A673 (cell line): ENCODE measurements at regions of chr12 and their contacts with region 1.

Region 1: DNA sequence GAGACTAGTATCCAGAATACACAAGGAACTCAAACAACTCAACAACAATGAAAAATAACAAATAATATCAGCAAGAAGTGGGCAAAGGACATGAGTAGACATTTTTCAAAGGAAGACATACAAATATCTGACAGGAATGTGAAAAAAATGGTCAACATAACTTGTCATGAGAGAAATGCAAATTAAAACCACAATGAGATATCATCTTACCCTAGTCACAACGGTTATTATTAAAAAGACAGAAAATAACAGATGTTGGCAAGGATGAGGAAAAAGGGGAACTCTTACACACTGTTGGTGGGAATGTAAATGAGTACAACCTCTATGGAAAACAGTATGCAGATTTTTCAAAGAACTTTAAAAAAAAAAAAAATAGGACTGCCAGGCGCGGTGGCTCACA is 20.4 kb downstream of the VWF start:
- DNase-seq: no peak
- H3K4me3 ChIP-seq: no peak overlapping the region
- H3K27ac ChIP-seq: no peak overlapping the region
- H3K4me1 ChIP-seq: no peaks in the 10 kb centered on the region
- H3K27me3 ChIP-seq: no peaks in the 10 kb centered on the region
- CTCF ChIP-seq: no peak

Region 2: DNA sequence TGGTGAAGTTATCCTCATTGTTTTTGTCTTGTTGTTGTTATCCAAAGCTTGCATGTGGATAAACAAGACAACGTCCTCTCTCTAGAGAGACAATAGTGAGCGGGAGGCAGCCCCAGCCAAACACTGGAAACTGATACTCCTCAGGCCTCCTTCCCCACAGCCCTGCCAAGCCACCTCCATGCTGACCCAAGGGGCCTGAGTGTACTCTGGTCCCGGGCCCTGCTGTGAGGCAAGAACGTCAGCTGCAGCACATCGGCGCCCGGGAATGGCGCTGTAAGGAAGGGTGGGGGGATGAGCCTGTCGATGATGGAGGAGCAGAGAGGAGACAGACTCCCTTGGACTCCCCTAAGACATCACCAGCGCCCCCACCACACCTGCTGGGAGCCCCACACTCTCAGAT is 242.6 kb before region 1 on chr12:
- CTCF ChIA-PET with region 1: no interaction called
- POLR2A ChIA-PET with region 1: no interaction called
- intact Hi-C with region 1: no loop called
- DNase-seq: no peak
- H3K4me3 ChIP-seq: no peak overlapping the region
- H3K27ac ChIP-seq: no peak overlapping the region
- H3K4me1 ChIP-seq: no peaks in the 10 kb centered on the region
- H3K27me3 ChIP-seq: peaks cover 32% of the 10 kb centered on the region
- CTCF ChIP-seq: no peak

Region 3: GRCh38 chr12:6140651-6141447 is 36.8 kb after region 1 on chr12:
- CTCF ChIA-PET with region 1: no interaction called
- POLR2A ChIA-PET with region 1: interaction called, 13 read pairs
- intact Hi-C with region 1: no loop called
- DNase-seq: no peak
- H3K4me3 ChIP-seq: no peak overlapping the region
- H3K27ac ChIP-seq: no peak overlapping the region
- H3K4me1 ChIP-seq: no peaks in the 10 kb centered on the region
- H3K27me3 ChIP-seq: no peaks in the 10 kb centered on the region
- CTCF ChIP-seq: no peak

Region 4: GRCh38 chr12:6241495-6241894 is 137.5 kb after region 1 on chr12:
- CTCF ChIA-PET with region 1: no interaction called
- POLR2A ChIA-PET with region 1: no interaction called
- intact Hi-C with region 1: no loop called
- DNase-seq: no peak
- H3K4me3 ChIP-seq: no peak overlapping the region
- H3K27ac ChIP-seq: no peak overlapping the region
- H3K4me1 ChIP-seq: no peaks in the 10 kb centered on the region
- H3K27me3 ChIP-seq: no peaks in the 10 kb centered on the region
- CTCF ChIP-seq: no peak